Activated CD8-positive, alpha-beta T cell treated with anti-CD3 and anti-CD28 coated beads, Interleukin-2, amount 10 ng/mL, durations not matched to agents 7 days and 5 days (primary cell): ENCODE measurements at regions of chr1 and their contacts with region 1.

Region 1: GRCh38 chr1:206725109-206725963 is 40.6 kb downstream of the MAPKAPK2 start:
- DNase-seq: peak; percentile 81
- ATAC-seq: peak; percentile 66
- H3K4me3 Mint-ChIP-seq: no peak overlapping the region
- H3K27ac Mint-ChIP-seq: no peak overlapping the region
- H3K4me1 Mint-ChIP-seq: peaks cover 60% of the 10 kb centered on the region
- H3K27me3 Mint-ChIP-seq: no peaks in the 10 kb centered on the region

Region 2: DNA sequence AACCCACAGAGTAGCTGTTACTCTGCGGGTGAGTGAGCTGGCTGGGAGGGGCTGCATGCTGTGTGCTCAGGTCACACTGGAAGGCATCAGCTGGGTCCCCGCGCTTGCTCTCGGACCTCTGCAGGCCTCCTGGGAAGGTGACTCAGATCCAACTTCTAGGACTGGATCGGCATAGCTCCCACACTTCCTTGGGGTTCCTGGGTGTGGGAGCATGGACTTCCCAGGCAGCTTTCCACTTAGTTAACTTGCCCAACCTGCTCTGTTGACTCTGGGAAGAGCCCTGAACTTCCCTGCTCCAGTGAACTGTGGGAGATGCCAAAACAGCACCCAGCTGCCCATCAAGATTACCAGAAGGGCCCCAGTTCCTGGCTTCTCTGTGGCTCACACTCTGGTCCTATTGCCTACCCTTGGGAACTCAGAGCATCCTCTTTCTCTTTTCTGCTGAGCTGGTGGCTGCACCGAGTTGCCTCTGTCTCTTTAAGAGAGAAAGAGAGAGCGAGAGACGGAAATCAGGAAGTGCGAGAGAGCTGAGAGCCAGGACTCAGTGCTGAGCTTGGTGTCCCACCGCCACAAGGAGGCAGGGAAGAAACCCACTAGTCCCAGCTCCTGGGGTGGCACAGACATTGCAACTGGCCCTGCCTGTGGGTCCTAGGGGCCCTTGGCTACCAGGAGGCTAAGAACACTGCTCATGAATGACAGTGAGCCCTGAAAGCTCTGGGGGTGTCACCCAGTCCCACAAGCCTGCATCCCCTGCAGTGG is 255.2 kb before region 1 on chr1 and contains the start of gene IKBKE:
- CTCF ChIA-PET with region 1: no interaction called
- POLR2A ChIA-PET with region 1: no interaction called
- DNase-seq: peak; percentile 73
- ATAC-seq: peak; percentile 71
- H3K4me3 Mint-ChIP-seq: peak within 1 kb of the TSS; percentile 89
- H3K27ac Mint-ChIP-seq: peak within 1 kb of the TSS; percentile 94
- H3K4me1 Mint-ChIP-seq: peaks cover 88% of the 10 kb centered on the region
- H3K27me3 Mint-ChIP-seq: no peaks in the 10 kb centered on the region
- total RNA-seq, gene IKBKE: 68.3 to 70.1 TPM

Region 3: GRCh38 chr1:206693029-206693428 is 32.3 kb before region 1 on chr1:
- CTCF ChIA-PET with region 1: interaction called, 10 read pairs
- POLR2A ChIA-PET with region 1: no interaction called
- DNase-seq: no peak
- ATAC-seq: no peak
- H3K4me3 Mint-ChIP-seq: no peak overlapping the region
- H3K27ac Mint-ChIP-seq: peak overlapping the region; percentile 5
- H3K4me1 Mint-ChIP-seq: peaks cover 42% of the 10 kb centered on the region
- H3K27me3 Mint-ChIP-seq: no peaks in the 10 kb centered on the region

Region 4: DNA sequence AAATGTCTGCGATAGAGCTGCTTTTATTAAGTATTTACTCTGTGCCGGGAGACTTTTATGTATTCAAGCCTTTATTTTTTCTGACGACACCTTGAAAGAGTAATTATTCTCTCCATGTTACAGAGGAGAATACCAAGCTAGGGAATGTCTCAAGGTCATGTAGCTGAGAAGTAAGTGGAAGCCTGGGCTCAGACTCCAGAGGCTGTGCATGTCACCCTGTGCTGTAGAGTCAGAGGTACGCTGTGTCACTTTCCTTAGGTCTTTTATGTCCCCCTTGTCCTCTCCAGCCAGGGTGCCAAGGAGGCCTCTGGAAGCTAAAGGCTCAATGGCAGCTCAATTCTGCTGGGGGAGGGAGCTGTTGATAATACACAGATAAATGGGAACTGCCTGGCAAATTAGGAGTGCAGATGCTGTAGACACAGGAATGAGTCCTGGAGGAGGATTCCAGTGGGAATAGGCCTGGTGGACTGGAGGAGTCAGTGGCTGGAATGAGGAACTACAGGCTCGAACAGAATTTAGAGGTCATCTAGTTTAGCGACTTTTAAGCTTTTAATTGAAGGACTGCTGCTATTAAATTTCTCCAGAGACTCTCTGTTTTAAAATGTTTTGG is 35.9 kb after region 1 on chr1:
- CTCF ChIA-PET with region 1: interaction called, 24 read pairs
- POLR2A ChIA-PET with region 1: no interaction called
- DNase-seq: no peak
- ATAC-seq: no peak
- H3K4me3 Mint-ChIP-seq: no peak overlapping the region
- H3K27ac Mint-ChIP-seq: no peak overlapping the region
- H3K4me1 Mint-ChIP-seq: peaks cover 38% of the 10 kb centered on the region
- H3K27me3 Mint-ChIP-seq: peaks cover 13% of the 10 kb centered on the region

Region 5: GRCh38 chr1:206784471-206784903 is 59.2 kb after region 1 on chr1:
- CTCF ChIA-PET with region 1: interaction called, 24 read pairs
- POLR2A ChIA-PET with region 1: no interaction called
- DNase-seq: peak; percentile 94
- ATAC-seq: peak; percentile 84
- H3K4me3 Mint-ChIP-seq: peak overlapping the region; percentile 35
- H3K27ac Mint-ChIP-seq: peak overlapping the region; percentile 86
- H3K4me1 Mint-ChIP-seq: peaks cover 66% of the 10 kb centered on the region
- H3K27me3 Mint-ChIP-seq: peaks cover 15% of the 10 kb centered on the region

Region 6: GRCh38 chr1:206918076-206918475 is 192.7 kb after region 1 on chr1:
- CTCF ChIA-PET with region 1: interaction called, 75 read pairs
- POLR2A ChIA-PET with region 1: no interaction called
- DNase-seq: no peak
- ATAC-seq: no peak
- H3K4me3 Mint-ChIP-seq: peak overlapping the region; percentile 58
- H3K27ac Mint-ChIP-seq: peak overlapping the region; percentile 75
- H3K4me1 Mint-ChIP-seq: peaks cover 66% of the 10 kb centered on the region
- H3K27me3 Mint-ChIP-seq: no peaks in the 10 kb centered on the region